Activated CD4-positive, alpha-beta memory T cell treated with anti-CD3 and anti-CD28 coated beads for 36 hours (primary cell): ENCODE measurements at regions of chr17 and their contacts with region 1.

Region 1: DNA sequence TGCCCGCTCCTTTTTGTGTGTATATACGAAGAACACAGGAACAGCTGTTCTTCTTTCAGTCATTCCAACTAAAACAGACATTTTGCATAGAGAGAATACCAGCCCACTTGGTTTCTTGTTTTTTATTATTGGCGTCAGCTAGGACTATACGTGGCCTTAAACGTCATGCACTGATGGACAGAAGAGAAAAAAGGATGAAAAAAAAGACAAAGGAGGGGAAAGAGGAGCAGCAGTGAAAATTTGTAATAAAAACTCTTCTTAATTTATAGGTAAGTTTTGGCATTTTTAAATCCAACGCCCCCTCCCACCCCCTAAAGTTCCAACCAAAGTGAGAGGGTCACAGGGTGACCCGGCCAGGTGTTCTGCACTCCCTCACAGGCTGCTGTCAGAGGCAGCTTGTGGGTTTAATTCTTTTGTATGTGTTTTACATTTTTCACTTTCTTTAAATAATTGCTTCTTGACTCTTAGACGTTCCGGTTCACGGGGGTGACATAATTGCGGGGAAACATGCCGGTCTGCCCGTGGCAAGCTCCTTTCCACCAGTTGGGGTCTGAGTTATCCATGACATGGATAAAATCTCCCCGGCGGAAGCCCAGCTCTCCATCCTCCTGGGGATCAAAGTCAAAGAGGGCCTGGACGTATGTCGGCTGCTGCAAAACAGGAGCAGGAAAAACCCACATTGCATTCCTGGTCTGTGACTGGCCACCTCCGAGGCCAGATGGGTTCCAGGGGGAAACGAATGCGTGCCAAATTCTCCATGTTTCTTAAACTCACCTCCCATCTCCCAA is 30.9 kb upstream of the SLC25A19 start:
- DNase-seq: no peak
- H3K4me3 Mint-ChIP-seq: no peak overlapping the region
- H3K27ac Mint-ChIP-seq: peak overlapping the region; percentile 28
- H3K4me1 Mint-ChIP-seq: peaks cover 19% of the 10 kb centered on the region
- H3K27me3 Mint-ChIP-seq: no peaks in the 10 kb centered on the region

Region 2: GRCh38 chr17:75338335-75338734 is 18.2 kb after region 1 on chr17:
- CTCF ChIA-PET with region 1: interaction called, 24 read pairs
- POLR2A ChIA-PET with region 1: no interaction called
- intact Hi-C with region 1: no loop called
- DNase-seq: peak; percentile 37
- H3K4me3 Mint-ChIP-seq: peak overlapping the region; percentile 33
- H3K27ac Mint-ChIP-seq: peak overlapping the region; percentile 74
- H3K4me1 Mint-ChIP-seq: peaks cover 78% of the 10 kb centered on the region
- H3K27me3 Mint-ChIP-seq: no peaks in the 10 kb centered on the region

Region 3: DNA sequence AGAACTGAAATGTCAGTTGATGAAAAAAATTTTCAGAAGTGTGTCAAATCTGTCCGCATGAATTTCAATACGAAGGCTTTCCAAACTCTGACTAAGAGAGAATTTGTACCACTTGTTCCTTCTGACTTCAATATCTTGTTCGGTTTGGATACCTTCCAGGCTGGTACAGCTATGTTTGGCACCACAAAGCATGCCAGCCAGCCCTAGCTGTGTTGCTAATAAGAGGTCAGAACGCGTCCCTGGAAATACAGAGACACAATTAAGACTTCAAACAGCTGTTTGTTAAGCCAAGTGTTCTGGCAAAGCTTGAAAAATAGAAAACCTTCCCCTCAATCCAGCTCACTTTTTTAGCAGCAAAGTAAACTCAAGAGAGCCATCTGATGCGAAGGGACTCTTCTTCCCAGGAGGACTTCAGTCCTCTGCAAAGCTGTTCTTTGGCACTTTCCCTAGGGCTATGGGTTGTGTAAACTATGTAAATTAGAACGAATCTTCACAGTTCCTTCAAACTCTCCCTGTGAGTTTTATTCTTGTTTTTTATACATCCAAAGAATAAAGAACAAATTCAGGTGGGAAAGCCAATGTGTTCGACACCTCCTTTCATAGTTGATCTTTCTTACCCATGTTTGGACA is 50.3 kb after region 1 on chr17:
- CTCF ChIA-PET with region 1: interaction called, 10 read pairs
- POLR2A ChIA-PET with region 1: no interaction called
- intact Hi-C with region 1: no loop called
- DNase-seq: no peak
- H3K4me3 Mint-ChIP-seq: no peak overlapping the region
- H3K27ac Mint-ChIP-seq: no peak overlapping the region
- H3K4me1 Mint-ChIP-seq: peaks cover 82% of the 10 kb centered on the region
- H3K27me3 Mint-ChIP-seq: no peaks in the 10 kb centered on the region

Region 4: GRCh38 chr17:75400326-75400939 is 80.3 kb after region 1 on chr17:
- CTCF ChIA-PET with region 1: interaction called, 31 read pairs
- POLR2A ChIA-PET with region 1: interaction called, 6 read pairs
- intact Hi-C with region 1: loop called (anchors 1 kb)
- DNase-seq: no peak
- H3K4me3 Mint-ChIP-seq: no peak overlapping the region
- H3K27ac Mint-ChIP-seq: no peak overlapping the region
- H3K4me1 Mint-ChIP-seq: peaks cover 57% of the 10 kb centered on the region
- H3K27me3 Mint-ChIP-seq: no peaks in the 10 kb centered on the region

Region 5: GRCh38 chr17:75412455-75413317 is 92.6 kb after region 1 on chr17:
- CTCF ChIA-PET with region 1: interaction called, 24 read pairs
- POLR2A ChIA-PET with region 1: no interaction called
- intact Hi-C with region 1: no loop called
- DNase-seq: peak; percentile 86
- H3K4me3 Mint-ChIP-seq: peak overlapping the region; percentile 49
- H3K27ac Mint-ChIP-seq: peak overlapping the region; percentile 19
- H3K4me1 Mint-ChIP-seq: peaks cover 16% of the 10 kb centered on the region
- H3K27me3 Mint-ChIP-seq: peaks cover 1% of the 10 kb centered on the region

Region 6: GRCh38 chr17:75442168-75443103 is 122.3 kb after region 1 on chr17:
- CTCF ChIA-PET with region 1: no interaction called
- POLR2A ChIA-PET with region 1: no interaction called
- intact Hi-C with region 1: no loop called
- DNase-seq: no peak
- H3K4me3 Mint-ChIP-seq: no peak overlapping the region
- H3K27ac Mint-ChIP-seq: no peak overlapping the region
- H3K4me1 Mint-ChIP-seq: no peaks in the 10 kb centered on the region
- H3K27me3 Mint-ChIP-seq: no peaks in the 10 kb centered on the region

Region 7: DNA sequence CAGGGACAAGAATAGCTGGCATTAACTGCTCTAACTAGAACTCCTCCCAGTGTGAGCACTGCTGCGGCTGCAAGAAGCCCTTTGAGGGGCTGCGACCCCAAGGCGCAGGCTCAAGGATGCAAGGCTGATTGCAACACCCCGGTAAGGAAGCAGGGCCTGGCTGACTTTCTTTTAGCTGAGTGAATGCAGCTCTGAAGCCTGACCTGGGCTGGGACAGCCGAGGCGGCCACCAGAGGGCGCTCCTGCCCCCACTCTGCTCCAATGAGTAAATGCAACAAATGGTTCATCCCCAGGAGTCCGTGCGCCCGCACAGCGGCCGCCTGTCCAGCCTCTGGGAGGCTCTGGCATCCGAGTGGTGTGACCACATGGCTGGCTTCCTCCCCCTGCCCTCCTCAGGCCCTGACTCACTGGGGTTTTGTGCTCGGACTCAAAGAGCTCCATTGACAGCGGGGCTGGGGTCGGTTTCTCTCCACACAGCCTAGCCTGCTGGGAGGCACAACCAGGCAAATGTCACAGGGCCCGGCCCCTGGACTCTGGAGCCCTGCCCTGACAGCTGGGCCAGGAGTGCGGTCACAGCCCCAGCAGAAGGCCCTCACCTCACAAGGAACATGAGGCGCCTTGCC is 312.9 kb after region 1 on chr17 and contains the start of gene SMIM5:
- CTCF ChIA-PET with region 1: no interaction called
- POLR2A ChIA-PET with region 1: no interaction called
- intact Hi-C with region 1: no loop called
- DNase-seq: peak; percentile 87
- H3K4me3 Mint-ChIP-seq: no peak within 1 kb of the TSS
- H3K27ac Mint-ChIP-seq: no peak within 1 kb of the TSS
- H3K4me1 Mint-ChIP-seq: no peaks in the 10 kb centered on the region
- H3K27me3 Mint-ChIP-seq: no peaks in the 10 kb centered on the region
- total RNA-seq, gene SMIM5: not detected